ENCODE measurements at regions of chr16 and their contacts with region 1.

Region 1: DNA sequence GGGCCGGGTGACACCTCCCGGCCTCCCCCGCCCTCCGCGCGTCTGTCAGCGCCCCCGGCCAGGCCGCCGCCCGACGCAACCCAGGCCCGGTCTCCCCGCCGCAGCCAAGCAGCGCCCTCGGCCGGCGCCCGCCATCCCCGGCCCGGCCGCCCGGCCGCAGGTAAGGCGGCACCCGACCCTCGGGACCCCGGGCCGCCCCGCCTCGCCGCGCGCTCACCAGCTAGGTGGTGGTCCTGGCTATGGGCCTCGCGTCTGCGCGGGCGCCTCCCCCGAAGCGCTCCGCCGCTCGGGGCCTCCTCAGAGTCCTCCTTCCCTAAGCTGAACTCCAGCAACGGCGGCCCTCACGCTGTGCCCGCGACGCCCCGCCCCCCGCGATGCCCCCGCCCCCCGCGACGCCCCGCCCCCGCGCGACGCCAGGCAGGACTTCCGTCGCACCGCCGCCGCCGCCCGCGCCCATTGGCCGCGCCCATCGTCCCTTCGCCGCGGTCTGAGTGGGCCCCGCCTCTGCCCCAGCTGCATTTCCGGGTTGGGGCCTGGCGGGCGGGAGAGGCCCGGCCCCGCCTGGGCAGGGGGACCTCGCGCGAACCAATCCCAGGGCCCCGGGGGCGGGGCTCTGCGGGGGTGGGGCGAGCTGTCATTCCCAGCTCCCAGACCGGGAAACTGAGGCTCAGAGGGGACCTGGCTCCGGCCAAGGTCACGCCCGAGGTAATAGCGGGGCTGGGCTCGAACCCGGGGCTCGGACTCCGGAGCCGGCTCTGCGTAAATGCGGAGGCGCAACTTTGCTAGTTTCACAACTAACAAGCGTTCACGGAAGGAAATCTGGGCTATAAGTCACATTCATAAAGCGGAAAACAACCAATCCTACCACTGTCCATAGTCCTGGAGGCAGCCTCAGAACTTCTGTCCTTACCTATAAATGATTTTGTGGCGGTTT is 9.0 kb upstream of the KCTD5 start:
- DNase-seq: peak; percentile 86 to 98 (median 94)
- ATAC-seq: peak; percentile 93 to 96 (median 96)
- H3K4me3 ChIP-seq: peak overlapping the region; percentile 63 to 90
- H3K4me3 Mint-ChIP-seq: peak overlapping the region; percentile 74 to 83 (median 81)
- H3K27ac ChIP-seq: peak overlapping the region; percentile 52
- H3K27ac Mint-ChIP-seq: peak overlapping the region; percentile 67 to 84
- H3K4me1 ChIP-seq: peaks cover 5 to 28% of the 10 kb centered on the region in 2 experiments
- H3K4me1 Mint-ChIP-seq: peaks cover 24 to 41% (median 32%) of the 10 kb centered on the region in 3 donors
- H3K27me3 ChIP-seq: no peaks in the 10 kb centered on the region
- H3K27me3 Mint-ChIP-seq: no peaks in the 10 kb centered on the region

Region 2: DNA sequence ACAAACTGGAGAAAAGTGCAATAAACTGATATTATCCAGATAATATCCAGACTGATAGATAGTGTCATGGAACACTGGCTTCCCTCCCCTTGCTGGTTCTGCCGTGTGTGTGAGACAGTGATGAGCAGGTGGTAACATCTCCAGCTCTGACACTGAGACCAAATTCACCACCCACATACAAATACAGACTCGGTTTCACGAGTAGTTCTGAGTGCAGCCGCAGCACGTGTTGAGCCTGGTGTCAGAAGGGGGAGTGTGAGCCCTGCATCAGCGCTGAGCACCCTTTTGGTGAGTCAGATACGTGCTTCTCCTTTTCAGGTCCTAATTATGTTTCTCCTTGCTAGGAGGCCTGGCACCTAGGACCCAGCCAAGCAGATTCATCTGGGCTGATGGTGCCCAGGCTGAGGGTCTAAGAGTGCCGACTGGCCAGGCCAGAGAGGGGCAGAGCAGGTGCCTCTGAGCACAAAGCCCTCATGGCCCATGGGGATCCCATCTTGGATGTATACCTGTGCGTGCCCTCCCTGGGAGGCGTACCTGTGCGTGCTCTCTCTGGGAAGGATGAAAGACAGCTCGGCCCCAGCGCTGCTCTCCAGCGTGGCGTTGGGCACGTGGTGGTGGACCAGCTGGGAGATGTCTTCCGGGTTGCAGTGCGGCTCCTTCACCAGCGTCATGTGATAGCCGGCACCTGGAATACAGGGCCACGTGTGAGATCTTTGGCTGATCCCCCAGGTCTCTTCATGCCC is 378.1 kb before region 1 on chr16:
- CTCF ChIA-PET with region 1: no interaction called
- POLR2A ChIA-PET with region 1: no interaction called
- DNase-seq: peak in 2 of 35 experiments; percentile 4
- ATAC-seq: no peak
- H3K4me3 ChIP-seq: no peak overlapping the region
- H3K4me3 Mint-ChIP-seq: no peak overlapping the region
- H3K27ac ChIP-seq: no peak overlapping the region
- H3K27ac Mint-ChIP-seq: no peak overlapping the region
- H3K4me1 ChIP-seq: peaks cover 0 to 9% of the 10 kb centered on the region in 2 experiments
- H3K4me1 Mint-ChIP-seq: no peaks in the 10 kb centered on the region
- H3K27me3 ChIP-seq: no peaks in the 10 kb centered on the region
- H3K27me3 Mint-ChIP-seq: no peaks in the 10 kb centered on the region

Region 3: GRCh38 chr16:2614761-2615191 is 58.6 kb before region 1 on chr16:
- CTCF ChIA-PET with region 1: no interaction called
- POLR2A ChIA-PET with region 1: no interaction called
- DNase-seq: no peak
- ATAC-seq: no peak
- H3K4me3 ChIP-seq: no peak overlapping the region
- H3K4me3 Mint-ChIP-seq: no peak overlapping the region
- H3K27ac ChIP-seq: no peak overlapping the region
- H3K27ac Mint-ChIP-seq: no peak overlapping the region
- H3K4me1 ChIP-seq: no peaks in the 10 kb centered on the region
- H3K4me1 Mint-ChIP-seq: no peaks in the 10 kb centered on the region
- H3K27me3 ChIP-seq: no peaks in the 10 kb centered on the region
- H3K27me3 Mint-ChIP-seq: no peaks in the 10 kb centered on the region

Region 4: GRCh38 chr16:2739625-2740435 is 66.5 kb after region 1 on chr16:
- CTCF ChIA-PET with region 1: no interaction called
- POLR2A ChIA-PET with region 1: no interaction called
- DNase-seq: no peak
- ATAC-seq: no peak
- H3K4me3 ChIP-seq: no peak overlapping the region
- H3K4me3 Mint-ChIP-seq: no peak overlapping the region
- H3K27ac ChIP-seq: no peak overlapping the region
- H3K27ac Mint-ChIP-seq: no peak overlapping the region
- H3K4me1 ChIP-seq: peaks cover 0 to 8% of the 10 kb centered on the region in 2 experiments
- H3K4me1 Mint-ChIP-seq: no peaks in the 10 kb centered on the region
- H3K27me3 ChIP-seq: peaks cover 0 to 53% of the 10 kb centered on the region in 2 experiments
- H3K27me3 Mint-ChIP-seq: peaks cover 4 to 7% of the 10 kb centered on the region in 2 donors

Region 5: DNA sequence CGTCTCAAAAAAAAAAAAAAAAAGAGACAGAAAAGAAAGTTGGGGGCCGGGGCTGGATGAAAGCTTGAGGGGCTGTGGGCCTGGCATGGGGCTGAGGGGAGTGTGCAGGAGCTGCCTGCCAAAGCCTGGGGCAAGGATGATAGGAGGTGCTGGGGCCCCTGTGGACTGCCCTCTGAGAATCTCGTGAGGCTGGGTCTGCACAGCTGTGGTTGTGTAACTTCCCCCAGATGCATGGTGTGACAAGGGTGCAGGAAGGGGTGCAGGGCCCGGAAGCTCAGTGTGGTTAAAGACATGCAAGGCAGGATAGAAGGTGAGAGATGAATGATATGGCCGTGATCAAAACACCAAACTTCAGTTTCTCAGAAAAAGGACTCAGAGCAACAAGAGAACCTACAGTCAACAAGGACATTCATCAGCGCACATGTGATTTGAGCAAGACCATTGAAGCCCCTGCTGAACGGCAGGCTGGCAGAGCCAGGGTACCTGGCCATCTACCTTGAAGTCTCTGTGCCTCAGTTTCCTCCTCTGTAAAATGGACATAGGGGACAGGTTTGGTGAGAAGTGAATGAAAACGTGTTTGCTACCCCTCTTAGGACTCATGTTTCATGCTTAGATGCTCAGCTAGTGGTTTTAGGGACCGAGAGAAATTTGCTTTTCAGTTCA is 401.7 kb after region 1 on chr16:
- CTCF ChIA-PET with region 1: no interaction called
- POLR2A ChIA-PET with region 1: interaction called in 1 of 2 experiments, 11 read pairs
- DNase-seq: peak; percentile 67 to 94 (median 86)
- ATAC-seq: peak; percentile 84 to 93 (median 88)
- H3K4me3 ChIP-seq: peak overlapping the region; percentile 4 to 38
- H3K4me3 Mint-ChIP-seq: peak overlapping the region; percentile 65 to 75 (median 73)
- H3K27ac ChIP-seq: peak overlapping the region; percentile 93
- H3K27ac Mint-ChIP-seq: peak overlapping the region; percentile 98 to 100
- H3K4me1 ChIP-seq: peaks cover 36 to 92% of the 10 kb centered on the region in 2 experiments
- H3K4me1 Mint-ChIP-seq: peaks cover 88 to 93% (median 88%) of the 10 kb centered on the region in 3 donors
- H3K27me3 ChIP-seq: no peaks in the 10 kb centered on the region
- H3K27me3 Mint-ChIP-seq: no peaks in the 10 kb centered on the region

Measured in T-cell (primary cell).